OCI-LY7 (cell line): ENCODE measurements at regions of chr7 and their contacts with region 1.

Region 1: GRCh38 chr7:99910976-99911375 is 8.4 kb downstream of the TRIM4 start:
- DNase-seq: no peak
- H3K4me3 ChIP-seq: no peak overlapping the region
- H3K27ac ChIP-seq: no peak overlapping the region
- H3K4me1 ChIP-seq: peaks cover 4% of the 10 kb centered on the region
- CTCF ChIP-seq: no peak

Region 2: DNA sequence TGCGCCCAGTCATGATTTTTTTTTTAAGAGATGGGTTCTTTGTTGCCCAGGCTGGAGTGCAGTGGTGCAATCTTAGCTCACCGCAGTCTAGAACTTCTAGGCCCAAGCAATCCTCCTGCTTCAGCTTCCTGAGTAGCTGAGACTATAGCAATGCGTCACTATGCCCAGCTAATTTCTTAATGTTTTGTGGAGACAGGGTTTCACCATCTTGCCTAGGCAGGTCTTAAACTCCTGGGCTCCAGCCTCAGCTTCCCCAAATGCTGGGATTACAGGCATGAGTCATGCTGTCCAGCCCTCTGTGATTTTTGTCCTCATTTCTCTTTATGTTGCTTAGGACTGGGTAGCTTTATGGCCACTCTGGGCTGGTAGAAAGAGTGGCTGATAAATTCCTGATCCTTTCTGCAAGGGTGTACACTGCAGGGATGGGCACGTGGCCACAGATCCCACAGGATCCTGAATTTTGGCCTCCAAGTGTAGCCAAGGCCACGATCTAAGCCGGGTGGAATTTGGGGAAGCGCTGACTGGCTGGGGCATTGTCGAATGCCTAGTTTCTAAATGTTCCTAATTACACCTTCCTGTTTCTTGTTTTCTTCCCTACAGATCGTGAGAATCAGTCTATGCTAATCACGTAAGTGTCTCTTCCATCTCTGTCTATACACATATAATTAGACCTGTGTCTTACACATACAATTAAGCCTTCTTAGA is 662.4 kb before region 1 on chr7:
- CTCF ChIA-PET with region 1: no interaction called
- POLR2A ChIA-PET with region 1: no interaction called
- intact Hi-C with region 1: no loop called
- DNase-seq: no peak
- H3K4me3 ChIP-seq: no peak overlapping the region
- H3K27ac ChIP-seq: no peak overlapping the region
- H3K4me1 ChIP-seq: no peaks in the 10 kb centered on the region
- CTCF ChIP-seq: no peak

Region 3: GRCh38 chr7:99392677-99393354 is 518.2 kb before region 1 on chr7:
- CTCF ChIA-PET with region 1: no interaction called
- POLR2A ChIA-PET with region 1: no interaction called
- intact Hi-C with region 1: no loop called
- DNase-seq: peak; percentile 66
- H3K4me3 ChIP-seq: peak overlapping the region; percentile 41
- H3K27ac ChIP-seq: peak overlapping the region; percentile 1
- H3K4me1 ChIP-seq: peaks cover 15% of the 10 kb centered on the region
- CTCF ChIP-seq: no peak

Region 4: DNA sequence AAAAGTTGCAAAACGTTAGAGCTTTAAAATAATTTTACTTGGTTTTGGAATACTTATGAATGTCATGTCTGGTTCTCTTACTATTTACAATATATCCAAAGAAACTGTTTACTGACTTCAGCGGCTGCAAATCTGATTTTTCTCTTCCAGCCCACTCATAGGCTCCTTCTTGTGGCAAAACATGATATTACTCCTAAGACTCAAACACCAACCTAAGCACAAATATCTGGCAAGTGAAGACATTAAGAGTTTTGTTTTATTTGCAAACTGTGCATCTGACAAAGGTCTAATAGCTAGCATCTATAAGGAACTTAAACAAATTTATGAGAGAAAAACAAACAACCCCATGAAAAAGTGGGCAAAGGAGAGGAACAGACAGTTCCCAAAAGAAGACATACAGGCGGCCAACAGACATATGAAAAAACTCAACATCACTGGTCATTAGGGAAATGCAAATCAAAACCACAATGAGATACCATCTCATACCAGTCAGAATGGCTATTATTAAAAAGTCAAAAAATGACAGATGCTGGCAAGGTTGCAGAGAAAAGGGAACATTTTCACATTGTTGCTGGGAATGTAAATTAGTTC is 38.8 kb after region 1 on chr7:
- CTCF ChIA-PET with region 1: no interaction called
- POLR2A ChIA-PET with region 1: no interaction called
- intact Hi-C with region 1: loop called (anchors 2 kb)
- DNase-seq: peak; percentile 23
- H3K4me3 ChIP-seq: no peak overlapping the region
- H3K27ac ChIP-seq: no peak overlapping the region
- H3K4me1 ChIP-seq: peaks cover under 1% of the 10 kb centered on the region
- CTCF ChIP-seq: peak; percentile 72

Region 5: DNA sequence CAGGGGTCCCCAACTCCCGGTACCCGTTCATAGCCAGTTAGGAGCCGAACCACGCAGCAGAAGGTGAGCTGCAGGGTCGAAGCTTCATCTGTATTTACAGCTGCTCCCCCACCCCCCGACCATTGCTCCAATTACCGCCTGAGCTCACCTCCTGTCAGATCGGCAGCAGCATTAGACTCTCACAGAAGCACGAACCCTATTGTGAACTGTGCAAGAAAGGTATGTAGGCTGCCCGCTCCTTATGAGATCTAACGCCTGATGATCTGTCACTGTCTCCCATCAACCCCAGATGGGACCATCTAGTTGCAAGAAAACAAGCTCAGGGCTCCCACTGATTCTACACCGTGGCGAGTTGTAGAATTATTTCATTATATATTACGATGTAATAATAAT is 79.5 kb after region 1 on chr7:
- CTCF ChIA-PET with region 1: no interaction called
- POLR2A ChIA-PET with region 1: no interaction called
- intact Hi-C with region 1: loop called (anchors 1 kb)
- DNase-seq: no peak
- H3K4me3 ChIP-seq: no peak overlapping the region
- H3K27ac ChIP-seq: no peak overlapping the region
- H3K4me1 ChIP-seq: no peaks in the 10 kb centered on the region
- CTCF ChIP-seq: no peak